IMR-90 (cell line): ENCODE measurements at regions of chr5 and their contacts with region 1.

Region 1: DNA sequence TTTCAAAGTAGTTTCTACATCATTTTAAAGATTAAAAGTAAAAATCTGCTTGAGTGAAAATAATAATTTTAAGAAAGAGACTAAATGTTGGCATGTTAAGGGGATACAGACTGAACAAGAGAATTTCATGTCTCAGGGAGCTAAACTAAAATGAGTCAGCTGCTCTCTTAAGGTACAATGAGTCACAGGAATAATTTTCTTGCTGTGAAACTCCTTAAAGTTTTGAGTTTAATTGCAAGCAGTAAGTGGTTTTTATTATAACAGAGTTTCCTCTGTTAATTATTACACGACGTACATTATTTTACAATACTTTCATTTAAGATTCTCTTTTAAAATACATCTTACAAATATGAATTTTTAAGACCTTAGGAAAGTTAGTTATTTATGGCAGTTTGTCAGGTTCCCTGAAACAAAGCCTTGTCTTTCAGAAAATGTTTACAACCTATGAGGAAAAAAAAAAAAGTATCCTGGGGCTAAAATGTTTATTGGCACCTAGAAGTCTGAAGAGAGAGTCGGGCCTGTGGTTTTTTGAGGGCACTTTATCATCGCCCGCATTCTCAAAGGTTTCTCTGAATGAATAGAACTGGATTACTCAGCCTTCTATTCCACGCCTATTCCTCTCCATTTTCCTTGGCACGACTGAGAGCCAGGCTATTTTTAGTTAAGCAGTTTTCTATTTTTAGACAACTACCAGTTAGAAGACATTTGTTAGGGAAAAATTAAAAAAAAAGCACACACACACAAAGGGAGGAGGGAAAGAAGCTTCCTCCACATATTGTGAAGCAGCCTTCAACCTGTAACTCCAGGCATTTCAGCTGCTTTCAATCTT is 97.4 kb downstream of the MEF2C start:
- DNase-seq: peak; percentile 93
- ATAC-seq: peak; percentile 94
- H3K4me3 ChIP-seq: peak overlapping the region; percentile 7; the same call in 1 of the 2 replicates
- H3K27ac ChIP-seq: no peak overlapping the region
- H3K4me1 ChIP-seq: peaks cover 6% of the 10 kb centered on the region; the same call in 1 of the 2 replicates
- H3K27me3 ChIP-seq: no peaks in the 10 kb centered on the region
- CTCF ChIP-seq: no peak
- POLR2A ChIP-seq: peak; percentile 46; the same call in 1 of the 2 replicates
- RAD21 ChIP-seq: no peak

Region 2: GRCh38 chr5:88613050-88613449 is 172.6 kb before region 1 on chr5:
- CTCF ChIA-PET with region 1: no interaction called
- POLR2A ChIA-PET with region 1: no interaction called
- dilution Hi-C with region 1: no loop called
- in situ Hi-C with region 1: no loop called
- intact Hi-C with region 1: no loop called
- DNase-seq: no peak
- ATAC-seq: no peak
- H3K4me3 ChIP-seq: no peak overlapping the region
- H3K27ac ChIP-seq: no peak overlapping the region
- H3K4me1 ChIP-seq: no peaks in the 10 kb centered on the region
- H3K27me3 ChIP-seq: no peaks in the 10 kb centered on the region
- CTCF ChIP-seq: no peak
- POLR2A ChIP-seq: no peak
- RAD21 ChIP-seq: no peak

Region 3: GRCh38 chr5:88826646-88827585 is 41.3 kb after region 1 on chr5:
- CTCF ChIA-PET with region 1: no interaction called
- POLR2A ChIA-PET with region 1: no interaction called
- dilution Hi-C with region 1: no loop called
- in situ Hi-C with region 1: no loop called
- intact Hi-C with region 1: loop called (anchors 5 kb)
- DNase-seq: peak; percentile 90
- ATAC-seq: peak; percentile 53
- H3K4me3 ChIP-seq: peak overlapping the region; percentile 27; the same call in 1 of the 2 replicates
- H3K27ac ChIP-seq: peak overlapping the region; percentile 68; the same call in 1 of the 2 replicates
- H3K4me1 ChIP-seq: peaks cover 13% of the 10 kb centered on the region
- H3K27me3 ChIP-seq: no peaks in the 10 kb centered on the region
- CTCF ChIP-seq: no peak
- POLR2A ChIP-seq: no peak
- RAD21 ChIP-seq: no peak

Region 4: DNA sequence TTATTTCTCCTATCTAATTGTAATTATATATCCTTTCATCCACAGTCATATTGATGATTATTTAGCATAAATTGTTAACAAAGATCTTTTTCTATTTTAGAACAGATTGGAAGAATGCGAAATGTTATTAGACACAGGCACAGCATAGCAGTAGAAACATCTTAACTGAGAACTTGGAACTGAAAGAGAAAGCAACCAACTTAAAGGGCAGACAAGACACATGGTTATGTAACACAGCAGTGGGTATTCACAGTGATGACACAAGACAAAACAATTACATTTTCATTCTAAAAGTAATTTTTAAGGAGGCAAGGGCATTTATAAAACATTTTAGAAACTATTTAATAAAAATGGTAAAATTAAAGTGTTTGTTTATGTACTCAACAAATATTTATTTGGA is 155.1 kb after region 1 on chr5:
- CTCF ChIA-PET with region 1: no interaction called
- POLR2A ChIA-PET with region 1: no interaction called
- dilution Hi-C with region 1: no loop called
- in situ Hi-C with region 1: no loop called
- intact Hi-C with region 1: loop called (anchors 10 kb)
- DNase-seq: no peak
- ATAC-seq: no peak
- H3K4me3 ChIP-seq: no peak overlapping the region
- H3K27ac ChIP-seq: no peak overlapping the region
- H3K4me1 ChIP-seq: peaks cover 17% of the 10 kb centered on the region
- H3K27me3 ChIP-seq: no peaks in the 10 kb centered on the region
- CTCF ChIP-seq: no peak
- POLR2A ChIP-seq: no peak
- RAD21 ChIP-seq: no peak

Region 5: GRCh38 chr5:88956416-88957412 is 171.1 kb after region 1 on chr5:
- CTCF ChIA-PET with region 1: no interaction called
- POLR2A ChIA-PET with region 1: no interaction called
- dilution Hi-C with region 1: no loop called
- in situ Hi-C with region 1: no loop called
- intact Hi-C with region 1: no loop called
- DNase-seq: no peak
- ATAC-seq: no peak
- H3K4me3 ChIP-seq: no peak overlapping the region
- H3K27ac ChIP-seq: no peak overlapping the region
- H3K4me1 ChIP-seq: 0 out of 2 replicates have a peak, but pooled peaks cover 3% of the 10 kb centered on the region
- H3K27me3 ChIP-seq: peaks cover 3% of the 10 kb centered on the region
- CTCF ChIP-seq: no peak
- POLR2A ChIP-seq: no peak
- RAD21 ChIP-seq: no peak

Region 6: GRCh38 chr5:89613222-89613956 is 827.8 kb after region 1 on chr5:
- CTCF ChIA-PET with region 1: no interaction called
- POLR2A ChIA-PET with region 1: no interaction called
- dilution Hi-C with region 1: no loop called
- in situ Hi-C with region 1: no loop called
- intact Hi-C with region 1: no loop called
- DNase-seq: no peak
- ATAC-seq: no peak
- H3K4me3 ChIP-seq: no peak overlapping the region
- H3K27ac ChIP-seq: no peak overlapping the region
- H3K4me1 ChIP-seq: no peaks in the 10 kb centered on the region
- H3K27me3 ChIP-seq: no peaks in the 10 kb centered on the region
- CTCF ChIP-seq: no peak
- POLR2A ChIP-seq: no peak
- RAD21 ChIP-seq: no peak